ENCODE measurements at regions of chr3 and their contacts with region 1.

Region 1: GRCh38 chr3:45210308-45211041 is 15.6 kb downstream of the TMEM158 start:
- DNase-seq: peak; percentile 83
- H3K4me3 Mint-ChIP-seq: no peak overlapping the region
- H3K27ac Mint-ChIP-seq: no peak overlapping the region
- H3K4me1 Mint-ChIP-seq: peaks cover 29% of the 10 kb centered on the region
- H3K27me3 Mint-ChIP-seq: peaks cover 26% of the 10 kb centered on the region

Region 2: DNA sequence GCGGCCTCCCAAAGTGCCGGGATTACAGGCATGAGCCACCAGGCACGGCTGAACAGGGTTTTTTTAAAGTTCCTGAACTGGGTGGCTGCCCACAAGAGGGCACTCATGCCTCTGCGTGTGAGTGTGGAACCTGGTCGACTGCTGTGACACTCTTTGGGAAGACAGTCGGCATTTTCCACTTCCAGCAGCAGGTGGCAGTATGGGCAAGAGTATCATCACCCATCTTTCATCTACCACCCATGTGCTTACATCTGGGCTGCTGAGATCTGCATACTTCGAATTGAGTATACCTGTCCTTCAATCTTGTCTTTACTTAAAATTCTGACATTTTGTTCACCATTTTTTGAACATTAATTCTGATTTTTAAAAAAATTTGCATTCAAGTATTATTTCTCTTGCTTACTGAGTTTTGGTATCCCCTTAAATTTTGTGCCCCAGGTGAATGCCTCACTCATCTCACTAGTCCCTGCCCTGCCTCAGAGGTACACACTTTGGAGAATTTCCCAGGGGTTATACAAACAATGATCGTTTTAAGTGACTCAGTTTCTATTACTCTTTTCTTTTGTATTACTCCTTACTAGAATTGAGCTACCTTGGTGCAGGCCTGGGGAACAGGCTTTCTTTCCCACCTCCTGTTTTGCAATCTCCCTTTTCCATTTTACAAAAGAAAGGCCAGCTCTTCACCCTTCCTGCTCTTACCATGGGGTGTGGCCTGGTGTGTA is 172.6 kb before region 1 on chr3:
- CTCF ChIA-PET with region 1: interaction called, 294 read pairs
- POLR2A ChIA-PET with region 1: interaction called, 43 read pairs
- DNase-seq: peak; percentile 94
- H3K4me3 Mint-ChIP-seq: no peak overlapping the region
- H3K27ac Mint-ChIP-seq: no peak overlapping the region
- H3K4me1 Mint-ChIP-seq: peaks cover 55% of the 10 kb centered on the region
- H3K27me3 Mint-ChIP-seq: peaks cover 32% of the 10 kb centered on the region

Region 3: GRCh38 chr3:45043728-45044299 is 166.7 kb before region 1 on chr3:
- CTCF ChIA-PET with region 1: interaction called, 294 read pairs
- POLR2A ChIA-PET with region 1: interaction called, 43 read pairs
- DNase-seq: no peak
- H3K4me3 Mint-ChIP-seq: no peak overlapping the region
- H3K27ac Mint-ChIP-seq: no peak overlapping the region
- H3K4me1 Mint-ChIP-seq: peaks cover 21% of the 10 kb centered on the region
- H3K27me3 Mint-ChIP-seq: peaks cover 25% of the 10 kb centered on the region

Region 4: GRCh38 chr3:45055411-45056143 is 154.9 kb before region 1 on chr3:
- CTCF ChIA-PET with region 1: interaction called, 34 read pairs
- POLR2A ChIA-PET with region 1: no interaction called
- DNase-seq: no peak
- H3K4me3 Mint-ChIP-seq: no peak overlapping the region
- H3K27ac Mint-ChIP-seq: no peak overlapping the region
- H3K4me1 Mint-ChIP-seq: peaks cover 33% of the 10 kb centered on the region
- H3K27me3 Mint-ChIP-seq: peaks cover 6% of the 10 kb centered on the region

Region 5: GRCh38 chr3:45118615-45119071 is 91.8 kb before region 1 on chr3:
- CTCF ChIA-PET with region 1: interaction called, 12 read pairs
- POLR2A ChIA-PET with region 1: no interaction called
- DNase-seq: peak; percentile 30
- H3K4me3 Mint-ChIP-seq: peak overlapping the region; percentile 29
- H3K27ac Mint-ChIP-seq: peak overlapping the region; percentile 86
- H3K4me1 Mint-ChIP-seq: peaks cover 57% of the 10 kb centered on the region
- H3K27me3 Mint-ChIP-seq: peaks cover 22% of the 10 kb centered on the region

Region 6: DNA sequence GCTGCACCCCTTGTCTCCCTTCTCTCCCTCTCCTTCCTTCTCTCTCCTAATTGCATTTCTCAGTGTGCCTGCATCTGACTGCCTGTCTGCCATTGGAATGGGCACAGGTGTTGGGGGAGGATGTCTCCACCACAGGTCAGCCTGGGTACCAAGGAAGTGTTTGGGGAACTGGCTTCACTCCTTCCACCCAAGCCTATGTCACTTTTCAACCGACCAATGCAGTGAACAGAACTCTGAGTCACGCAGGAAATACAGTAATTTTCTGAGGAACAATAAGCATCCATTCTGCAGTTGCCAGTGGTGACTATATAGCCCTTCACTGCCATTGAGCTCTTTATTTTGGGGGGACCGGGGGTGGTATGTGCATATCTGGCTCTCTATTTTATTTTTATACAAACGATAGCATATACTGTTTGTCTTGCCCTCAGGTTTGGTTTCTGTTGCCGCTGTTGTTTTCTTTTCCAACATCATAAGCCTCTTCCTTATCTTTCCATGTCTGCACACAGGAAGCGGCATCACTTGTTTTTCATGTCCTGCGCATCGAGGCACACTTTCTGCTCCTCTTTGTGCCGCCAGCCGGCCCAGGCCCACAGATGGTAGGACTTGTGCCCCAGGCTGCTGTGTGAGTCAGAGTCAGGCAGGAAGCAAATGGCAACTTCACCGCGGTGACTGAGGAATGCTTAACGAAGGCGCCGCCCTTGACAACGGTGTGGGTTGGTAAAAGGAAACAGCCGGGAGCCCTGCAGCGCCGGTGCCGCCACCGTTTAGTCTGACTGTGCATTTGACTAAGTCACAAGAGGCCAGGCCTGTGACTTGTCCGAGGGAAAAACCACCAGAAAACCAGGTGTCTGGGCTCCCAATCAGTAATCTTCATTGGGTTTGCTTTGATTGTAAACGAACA is 43.2 kb before region 1 on chr3:
- CTCF ChIA-PET with region 1: interaction called, 10 read pairs
- POLR2A ChIA-PET with region 1: no interaction called
- DNase-seq: peak; percentile 91
- H3K4me3 Mint-ChIP-seq: peak overlapping the region; percentile 47
- H3K27ac Mint-ChIP-seq: peak overlapping the region; percentile 91
- H3K4me1 Mint-ChIP-seq: peaks cover 48% of the 10 kb centered on the region
- H3K27me3 Mint-ChIP-seq: peaks cover 7% of the 10 kb centered on the region

Region 7: DNA sequence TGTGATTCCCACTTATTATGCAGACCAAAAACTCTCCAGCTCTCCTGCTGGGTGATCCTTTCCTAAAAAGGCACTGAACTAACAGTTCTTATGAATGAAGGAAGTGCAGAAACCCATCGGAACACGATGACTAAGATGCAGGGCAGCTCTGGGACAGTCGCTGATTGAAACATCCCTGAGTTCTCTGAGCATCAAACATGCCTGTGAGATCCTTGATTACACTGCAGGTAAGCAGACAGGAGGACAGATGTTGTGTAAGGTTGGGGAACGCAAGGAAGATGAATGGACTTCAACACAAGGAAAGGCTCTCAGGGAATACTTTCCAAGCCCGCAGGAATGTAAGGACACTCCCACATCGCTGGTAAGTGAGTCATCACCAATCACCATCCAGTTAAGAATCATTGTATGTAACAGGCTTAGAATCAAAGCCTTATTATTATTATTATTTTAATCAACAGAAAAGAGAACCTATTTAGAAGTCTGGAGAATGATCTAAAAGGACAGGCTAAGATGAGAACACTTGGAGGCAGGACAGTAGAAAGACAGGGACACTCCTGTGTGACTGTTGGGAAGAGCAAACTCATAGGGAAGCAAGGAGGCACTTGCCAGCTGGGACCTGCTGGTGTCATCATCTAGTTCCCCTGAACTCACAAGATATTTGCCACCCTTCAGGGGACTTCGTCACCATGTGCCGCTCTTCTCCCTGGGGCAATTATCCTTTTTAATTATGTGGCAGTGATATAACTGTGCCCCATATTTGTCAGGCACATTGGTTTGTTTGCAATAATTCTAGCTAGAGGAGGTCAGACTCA is 10.4 kb before region 1 on chr3:
- CTCF ChIA-PET with region 1: interaction called, 11 read pairs
- POLR2A ChIA-PET with region 1: interaction called, 3 read pairs
- DNase-seq: no peak
- H3K4me3 Mint-ChIP-seq: no peak overlapping the region
- H3K27ac Mint-ChIP-seq: no peak overlapping the region
- H3K4me1 Mint-ChIP-seq: peaks cover under 1% of the 10 kb centered on the region
- H3K27me3 Mint-ChIP-seq: peaks cover 63% of the 10 kb centered on the region